ENCODE measurements at regions of chr1 and their contacts with region 1.

Region 1: GRCh38 chr1:203127666-203128430 is at the start of gene ADORA1:
- DNase-seq: peak; percentile 72 to 98 (median 86)

Region 2: GRCh38 chr1:203038891-203039608 is 88.8 kb before region 1 on chr1:
- intact Hi-C with region 1: loop called (anchors 5 kb)
- DNase-seq: peak; percentile 62 to 96 (median 82)

Region 3: GRCh38 chr1:203076031-203076511 is 51.8 kb before region 1 on chr1:
- intact Hi-C with region 1: loop called (anchors 5 kb)
- DNase-seq: peak in 1 of 10 donors; percentile 78

Measured in posterior cingulate gyrus (tissue), 11 donors.